PC-3 (cell line): ENCODE measurements at regions of chr14 and their contacts with region 1.

Region 1: GRCh38 chr14:90419200-90419599 is 22.4 kb downstream of the CALM1 start:
- DNase-seq: peak; percentile 100
- ATAC-seq: peak; percentile 97
- H3K4me3 ChIP-seq: no peak overlapping the region
- H3K27ac ChIP-seq: peak overlapping the region; percentile 87
- H3K4me1 ChIP-seq: peaks cover 15% of the 10 kb centered on the region
- H3K27me3 ChIP-seq: no peaks in the 10 kb centered on the region
- CTCF ChIP-seq: no peak

Region 2: GRCh38 chr14:90388982-90389381 is 30.2 kb before region 1 on chr14:
- CTCF ChIA-PET with region 1: no interaction called
- POLR2A ChIA-PET with region 1: no interaction called
- intact Hi-C with region 1: no loop called
- DNase-seq: peak; percentile 79
- ATAC-seq: peak; percentile 57
- H3K4me3 ChIP-seq: no peak overlapping the region
- H3K27ac ChIP-seq: peak overlapping the region; percentile 60
- H3K4me1 ChIP-seq: peaks cover 31% of the 10 kb centered on the region
- H3K27me3 ChIP-seq: no peaks in the 10 kb centered on the region
- CTCF ChIP-seq: no peak

Region 3: GRCh38 chr14:91164685-91165084 is 745.5 kb after region 1 on chr14:
- CTCF ChIA-PET with region 1: interaction called, 13 read pairs
- POLR2A ChIA-PET with region 1: no interaction called
- intact Hi-C with region 1: no loop called
- DNase-seq: peak; percentile 86
- ATAC-seq: peak; percentile 98
- H3K4me3 ChIP-seq: no peak overlapping the region
- H3K27ac ChIP-seq: no peak overlapping the region
- H3K4me1 ChIP-seq: peaks cover 12% of the 10 kb centered on the region
- H3K27me3 ChIP-seq: no peaks in the 10 kb centered on the region
- CTCF ChIP-seq: no peak